Cardiac septum (tissue), 1 donor: ENCODE measurements at regions of chr5 and their contacts with region 1.

Region 1: GRCh38 chr5:114449860-114450421 is 88.1 kb downstream of the KCNN2 start:
- DNase-seq: no peak

Region 2: DNA sequence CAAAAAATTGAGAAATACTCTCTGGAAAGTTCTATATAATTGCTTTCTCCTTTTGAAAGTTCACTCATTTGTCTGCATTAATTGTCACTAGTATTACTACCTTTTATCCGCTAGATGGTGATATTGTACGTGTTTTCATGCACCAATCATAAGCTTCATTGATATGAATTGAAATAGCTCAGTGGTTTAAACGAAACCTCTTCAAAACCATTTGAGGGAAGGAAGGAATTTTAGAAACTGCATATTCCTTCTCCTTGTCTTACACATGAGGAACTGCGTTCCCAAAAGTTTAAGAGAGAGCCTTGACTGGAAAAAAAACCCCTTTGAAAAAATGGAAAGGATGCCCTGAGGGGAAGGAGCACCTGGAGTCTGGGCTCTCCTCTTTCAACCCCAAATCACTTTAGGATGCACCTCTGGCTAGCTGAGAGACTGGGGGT is 837.9 kb before region 1 on chr5:
- intact Hi-C with region 1: loop called (anchors 10 kb)
- DNase-seq: no peak

Region 3: GRCh38 chr5:113678924-113679575 is 770.9 kb before region 1 on chr5:
- intact Hi-C with region 1: loop called (anchors 5 kb)
- DNase-seq: no peak

Region 4: GRCh38 chr5:114018186-114018585 is 431.8 kb before region 1 on chr5:
- intact Hi-C with region 1: loop called (anchors 5 kb)
- DNase-seq: no peak

Region 5: DNA sequence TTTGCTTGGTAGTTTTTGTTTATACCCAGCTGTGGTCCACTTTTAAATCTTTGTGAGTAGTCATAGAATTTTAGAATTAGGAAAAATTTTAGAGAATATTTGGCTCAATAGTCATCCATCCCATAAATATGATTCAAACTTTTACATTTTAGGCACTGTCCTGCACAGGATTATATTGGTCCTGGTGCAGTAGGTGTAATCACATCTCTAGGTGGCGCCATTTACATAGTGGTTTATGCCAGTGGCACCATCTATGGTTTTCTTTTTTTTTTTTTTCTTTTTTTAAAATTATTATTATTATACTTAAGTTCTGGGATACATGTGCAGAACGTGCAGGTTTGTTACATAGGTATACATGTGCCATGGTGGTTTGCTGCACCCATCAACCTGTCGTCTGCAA is 348.8 kb before region 1 on chr5:
- intact Hi-C with region 1: loop called (anchors 5 kb)
- DNase-seq: no peak

Region 6: GRCh38 chr5:114305402-114306211 is 144.3 kb before region 1 on chr5:
- intact Hi-C with region 1: loop called (anchors 10 kb)
- DNase-seq: no peak

Region 7: GRCh38 chr5:114361724-114362196 is 88.2 kb before region 1 on chr5 and contains the start of gene KCNN2:
- intact Hi-C with region 1: loop called (anchors 5 kb)
- DNase-seq: peak; percentile 91
- total RNA-seq, gene KCNN2: 2.6 TPM

Region 8: GRCh38 chr5:114387433-114387832 is 62.5 kb before region 1 on chr5:
- intact Hi-C with region 1: no loop called
- DNase-seq: no peak